Left lung (tissue), 14 donors: ENCODE measurements at regions of chr17 and their contacts with region 1.

Region 1: GRCh38 chr17:46002311-46002972 is 3.4 kb downstream of the STH start:
- DNase-seq: peak in 3 of 4 donors; percentile 44 to 73 (median 61)
- ATAC-seq: peak; percentile 97
- H3K4me3 ChIP-seq: no peak overlapping the region
- H3K27ac ChIP-seq: no peak overlapping the region
- H3K4me1 ChIP-seq: no peaks in the 10 kb centered on the region
- H3K27me3 ChIP-seq: no peaks in the 10 kb centered on the region
- CTCF ChIP-seq: peak; percentile 93 to 98

Region 2: DNA sequence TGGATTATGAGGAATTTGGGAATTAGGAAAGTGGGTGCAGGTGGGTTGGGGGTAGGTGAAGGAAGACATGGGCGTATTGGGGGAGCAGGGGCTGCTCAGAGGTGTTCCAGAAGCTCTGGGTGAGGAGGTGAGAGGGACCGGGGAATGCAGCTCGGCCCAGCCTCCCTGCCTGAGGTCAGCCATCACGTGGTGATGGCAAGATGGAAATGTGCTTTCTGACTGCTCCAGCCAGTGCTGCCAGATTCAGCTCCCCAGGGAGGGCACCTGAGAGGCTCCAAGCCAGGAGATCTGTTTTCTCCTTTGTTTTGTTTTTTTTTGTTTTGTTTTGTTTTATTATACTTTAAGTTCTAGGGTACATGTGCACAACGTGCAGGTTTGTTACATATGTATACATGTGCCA is 38.6 kb before region 1 on chr17:
- intact Hi-C with region 1: no loop called
- DNase-seq: peak in 1 of 4 donors; percentile 19
- ATAC-seq: no peak
- H3K4me3 ChIP-seq: no peak overlapping the region
- H3K27ac ChIP-seq: no peak overlapping the region
- H3K4me1 ChIP-seq: no peaks in the 10 kb centered on the region
- H3K27me3 ChIP-seq: peaks cover 0 to 17% of the 10 kb centered on the region in 2 donors
- CTCF ChIP-seq: no peak

Region 3: DNA sequence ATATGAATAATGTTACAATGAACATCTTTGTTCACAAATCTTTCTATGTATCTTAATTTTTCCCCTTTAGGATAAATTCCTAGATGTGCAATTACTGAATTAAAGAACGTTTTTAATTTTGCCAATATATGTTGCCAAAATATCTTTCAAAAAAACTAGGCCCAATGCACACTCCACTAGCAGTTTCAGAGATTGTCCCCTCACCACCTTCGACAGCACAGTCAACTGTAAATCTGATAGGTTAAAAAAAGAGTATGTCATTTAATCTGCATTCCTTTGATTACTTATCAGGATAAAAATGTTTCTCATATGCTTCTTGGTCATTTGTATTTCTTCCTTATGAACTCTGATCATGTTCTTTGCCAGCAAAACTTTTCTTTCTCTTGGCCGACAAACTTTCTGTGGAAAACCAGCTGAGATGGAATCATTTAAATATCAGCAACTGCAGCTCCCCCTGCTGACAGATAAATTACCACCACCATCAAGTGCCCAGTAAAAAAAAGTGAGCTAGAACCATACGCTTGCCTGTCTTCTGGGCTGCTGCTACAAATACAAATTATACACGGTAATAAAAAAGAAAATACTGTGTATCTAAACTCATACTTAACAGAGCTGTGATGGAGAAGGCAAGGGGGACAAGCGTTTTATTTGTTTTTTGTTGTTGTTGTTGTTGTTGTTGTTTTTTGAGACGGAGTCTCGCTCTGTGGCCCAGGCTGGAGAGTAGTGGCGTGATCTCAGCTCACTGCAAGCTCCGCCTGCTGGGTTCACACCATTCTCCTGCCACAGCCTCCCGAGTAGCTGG is 210.4 kb after region 1 on chr17:
- intact Hi-C with region 1: loop called in 1 of 2 experiments (anchors 5 kb)
- DNase-seq: peak in 2 of 4 donors; percentile 80 to 87
- ATAC-seq: peak; percentile 94
- H3K4me3 ChIP-seq: no peak overlapping the region
- H3K27ac ChIP-seq: no peak overlapping the region
- H3K4me1 ChIP-seq: peaks cover 0 to 6% of the 10 kb centered on the region in 2 donors
- H3K27me3 ChIP-seq: no peaks in the 10 kb centered on the region
- CTCF ChIP-seq: peak; percentile 70 to 84